GM12878 (cell line): ENCODE measurements at regions of chr10 and their contacts with region 1.

Region 1: GRCh38 chr10:104925232-104925851 is 284.3 kb downstream of the SORCS3 start:
- DNase-seq: no peak
- ATAC-seq: peak; percentile 70
- H3K4me3 ChIP-seq: no peak overlapping the region
- H3K27ac ChIP-seq: no peak overlapping the region
- H3K4me1 ChIP-seq: no peaks in the 10 kb centered on the region
- H3K27me3 ChIP-seq: no peaks in the 10 kb centered on the region
- CTCF ChIP-seq: peak; percentile 57 to 78 (median 68); a peak in 5 of 6 replicates
- EP300 ChIP-seq: no peak
- POLR2A ChIP-seq: no peak
- RAD21 ChIP-seq: peak; percentile 55

Region 2: GRCh38 chr10:104521901-104522694 is 403.2 kb before region 1 on chr10:
- CTCF ChIA-PET with region 1: no interaction called
- POLR2A ChIA-PET with region 1: no interaction called
- RAD21 ChIA-PET with region 1: no interaction called
- SMC1A ChIA-PET with region 1: no interaction called
- in situ Hi-C with region 1: no loop called
- intact Hi-C with region 1: no loop called
- DNase-seq: no peak
- ATAC-seq: no peak
- H3K4me3 ChIP-seq: no peak overlapping the region
- H3K27ac ChIP-seq: no peak overlapping the region
- H3K4me1 ChIP-seq: no peaks in the 10 kb centered on the region
- H3K27me3 ChIP-seq: no peaks in the 10 kb centered on the region; a peak in 1 of 4 replicates
- CTCF ChIP-seq: no peak
- EP300 ChIP-seq: no peak
- POLR2A ChIP-seq: no peak
- RAD21 ChIP-seq: no peak

Region 3: GRCh38 chr10:104580774-104581675 is 344.3 kb before region 1 on chr10:
- CTCF ChIA-PET with region 1: no interaction called
- POLR2A ChIA-PET with region 1: no interaction called
- RAD21 ChIA-PET with region 1: interaction called, 3 read pairs
- SMC1A ChIA-PET with region 1: no interaction called
- in situ Hi-C with region 1: no loop called
- intact Hi-C with region 1: loop called (anchors 2 kb)
- DNase-seq: peak; percentile 1
- ATAC-seq: peak; percentile 94
- H3K4me3 ChIP-seq: no peak overlapping the region
- H3K27ac ChIP-seq: no peak overlapping the region
- H3K4me1 ChIP-seq: no peaks in the 10 kb centered on the region
- H3K27me3 ChIP-seq: no peaks in the 10 kb centered on the region
- CTCF ChIP-seq: peak; percentile 75 to 88 (median 81)
- EP300 ChIP-seq: no peak
- POLR2A ChIP-seq: no peak
- RAD21 ChIP-seq: peak; percentile 65

Region 4: GRCh38 chr10:104638861-104639589 is 286.3 kb before region 1 on chr10:
- CTCF ChIA-PET with region 1: no interaction called
- POLR2A ChIA-PET with region 1: no interaction called
- RAD21 ChIA-PET with region 1: no interaction called
- SMC1A ChIA-PET with region 1: no interaction called
- in situ Hi-C with region 1: no loop called
- intact Hi-C with region 1: loop called (anchors 2 kb)
- DNase-seq: no peak
- ATAC-seq: peak; percentile 80
- H3K4me3 ChIP-seq: no peak overlapping the region
- H3K27ac ChIP-seq: no peak overlapping the region
- H3K4me1 ChIP-seq: no peaks in the 10 kb centered on the region
- H3K27me3 ChIP-seq: peaks cover 2 to 10% of the 10 kb centered on the region in 2 experiments; a peak in 2 of 4 replicates
- CTCF ChIP-seq: peak; percentile 17 to 35 (median 23); a peak in 2 of 6 replicates
- EP300 ChIP-seq: no peak
- POLR2A ChIP-seq: no peak
- RAD21 ChIP-seq: no peak

Region 5: DNA sequence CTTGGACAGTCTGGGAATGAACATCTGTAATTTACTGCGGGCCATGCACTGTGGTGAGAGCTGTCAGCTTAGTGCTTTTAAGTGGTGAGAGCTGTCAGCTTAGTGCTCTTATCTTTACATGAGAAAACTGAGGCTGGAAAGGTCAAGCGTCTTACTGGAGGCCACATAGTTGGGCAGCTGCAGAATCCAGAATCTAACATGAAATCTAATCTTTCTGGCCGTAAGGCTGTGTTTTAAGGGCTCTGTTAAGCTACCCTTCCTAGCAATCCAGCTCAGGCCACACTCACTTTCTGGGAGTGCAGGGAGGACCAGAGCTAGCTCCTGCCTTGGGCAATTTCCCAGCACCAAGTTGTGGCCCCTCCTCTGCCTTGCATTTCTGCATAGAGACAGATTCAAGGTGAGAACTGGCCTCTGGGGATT is 214.0 kb before region 1 on chr10:
- CTCF ChIA-PET with region 1: no interaction called
- POLR2A ChIA-PET with region 1: no interaction called
- RAD21 ChIA-PET with region 1: no interaction called
- SMC1A ChIA-PET with region 1: no interaction called
- in situ Hi-C with region 1: no loop called
- intact Hi-C with region 1: no loop called
- DNase-seq: no peak
- ATAC-seq: no peak
- H3K4me3 ChIP-seq: no peak overlapping the region
- H3K27ac ChIP-seq: no peak overlapping the region
- H3K4me1 ChIP-seq: no peaks in the 10 kb centered on the region
- H3K27me3 ChIP-seq: no peaks in the 10 kb centered on the region
- CTCF ChIP-seq: no peak
- EP300 ChIP-seq: no peak
- POLR2A ChIP-seq: no peak
- RAD21 ChIP-seq: no peak

Region 6: DNA sequence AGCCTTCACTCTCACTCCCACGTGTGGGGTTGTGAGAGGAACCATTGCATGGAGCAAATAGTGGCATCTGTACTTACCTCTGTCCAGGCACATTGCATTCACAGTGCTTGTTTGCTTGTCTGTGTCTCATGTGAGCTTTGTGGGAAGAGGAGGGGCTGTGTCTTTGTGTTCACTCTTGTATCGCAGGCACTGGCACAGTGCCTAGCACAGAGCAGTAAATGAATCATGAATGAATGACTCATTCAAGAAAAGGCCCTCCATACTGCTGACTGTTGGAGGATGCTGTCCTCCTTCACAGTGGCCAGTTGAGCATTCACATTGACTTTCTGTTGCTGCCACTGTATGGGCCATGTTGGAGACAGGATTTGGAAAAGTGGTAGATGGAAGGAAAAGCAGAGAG is 159.0 kb before region 1 on chr10:
- CTCF ChIA-PET with region 1: interaction called, 12 read pairs
- POLR2A ChIA-PET with region 1: no interaction called
- RAD21 ChIA-PET with region 1: interaction called, 4 read pairs
- SMC1A ChIA-PET with region 1: no interaction called
- in situ Hi-C with region 1: no loop called
- intact Hi-C with region 1: loop called (anchors 2 kb)
- DNase-seq: no peak
- ATAC-seq: peak; percentile 60
- H3K4me3 ChIP-seq: no peak overlapping the region
- H3K27ac ChIP-seq: no peak overlapping the region
- H3K4me1 ChIP-seq: no peaks in the 10 kb centered on the region
- H3K27me3 ChIP-seq: no peaks in the 10 kb centered on the region
- CTCF ChIP-seq: no peak
- EP300 ChIP-seq: no peak
- POLR2A ChIP-seq: no peak
- RAD21 ChIP-seq: no peak

Region 7: DNA sequence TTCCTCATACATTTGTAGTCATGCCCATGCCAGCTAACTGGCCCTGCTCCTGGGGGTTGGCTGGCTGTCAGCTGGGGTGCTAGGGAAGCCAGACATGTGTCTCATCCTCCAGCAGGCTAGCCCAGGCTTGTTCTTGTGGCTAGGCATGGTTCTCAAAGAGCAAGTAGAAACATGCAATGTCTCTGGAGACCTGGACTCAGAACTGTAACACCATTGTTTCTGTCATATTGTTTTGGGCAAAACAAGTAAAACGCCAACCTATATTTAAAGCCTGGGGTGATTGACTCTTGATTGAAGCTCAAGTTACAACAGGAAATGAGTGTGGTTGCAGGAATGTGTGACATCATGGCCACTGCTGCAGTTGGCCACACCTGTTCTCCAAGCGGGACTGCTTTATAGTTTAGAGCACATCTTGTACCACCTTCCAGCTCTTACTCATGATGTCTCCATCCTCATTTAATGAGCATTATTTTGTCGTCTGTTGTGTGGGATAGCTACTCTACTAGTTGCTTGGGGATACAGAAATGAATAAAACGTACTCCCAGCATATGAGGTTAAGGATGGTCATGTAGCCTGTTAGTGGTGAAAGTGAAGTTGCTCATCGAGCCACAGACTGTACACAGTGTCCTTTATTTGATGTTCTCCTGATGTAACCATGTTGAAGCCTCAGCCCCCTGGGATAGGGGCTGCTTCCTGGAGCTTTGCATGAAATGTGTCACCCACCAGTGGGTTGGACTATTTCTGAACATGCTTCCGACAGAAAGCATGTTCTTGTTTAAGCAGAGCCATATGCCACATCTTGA is 115.9 kb before region 1 on chr10:
- CTCF ChIA-PET with region 1: no interaction called
- POLR2A ChIA-PET with region 1: no interaction called
- RAD21 ChIA-PET with region 1: no interaction called
- SMC1A ChIA-PET with region 1: no interaction called
- in situ Hi-C with region 1: no loop called
- intact Hi-C with region 1: loop called (anchors 2 kb)
- DNase-seq: no peak
- ATAC-seq: peak; percentile 88
- H3K4me3 ChIP-seq: no peak overlapping the region
- H3K27ac ChIP-seq: no peak overlapping the region
- H3K4me1 ChIP-seq: peaks cover 2% of the 10 kb centered on the region
- H3K27me3 ChIP-seq: no peaks in the 10 kb centered on the region
- CTCF ChIP-seq: no peak
- EP300 ChIP-seq: no peak
- POLR2A ChIP-seq: no peak
- RAD21 ChIP-seq: no peak

Region 8: DNA sequence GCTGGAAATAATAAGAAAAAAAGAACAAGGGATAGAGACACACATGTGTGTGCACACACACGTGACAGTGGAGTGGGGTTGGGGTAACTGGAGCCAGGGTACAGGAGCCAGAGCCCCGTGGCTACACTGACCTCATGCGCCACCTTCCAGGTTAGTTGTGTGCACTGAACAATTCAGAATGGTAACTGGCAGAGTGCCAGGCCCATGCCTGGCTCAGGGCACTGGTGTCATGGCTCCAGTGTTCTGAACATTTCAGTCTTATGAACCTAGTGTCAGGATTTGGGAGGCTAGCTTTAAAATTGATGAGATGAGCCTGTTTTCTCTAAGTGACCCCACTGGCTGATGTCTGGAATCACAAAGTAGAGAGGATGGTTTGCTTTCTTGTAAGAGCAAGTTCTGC is 14.6 kb before region 1 on chr10:
- CTCF ChIA-PET with region 1: interaction called, 12 read pairs
- POLR2A ChIA-PET with region 1: interaction called, 8 read pairs
- RAD21 ChIA-PET with region 1: interaction called, 3 read pairs
- SMC1A ChIA-PET with region 1: interaction called, 3 read pairs
- in situ Hi-C with region 1: no loop called
- intact Hi-C with region 1: no loop called
- DNase-seq: no peak
- ATAC-seq: no peak
- H3K4me3 ChIP-seq: no peak overlapping the region
- H3K27ac ChIP-seq: no peak overlapping the region
- H3K4me1 ChIP-seq: no peaks in the 10 kb centered on the region
- H3K27me3 ChIP-seq: no peaks in the 10 kb centered on the region; a peak in 1 of 4 replicates
- CTCF ChIP-seq: no peak
- EP300 ChIP-seq: no peak
- POLR2A ChIP-seq: no peak
- RAD21 ChIP-seq: no peak